Dorsolateral prefrontal cortex (tissue), 120 donors: ENCODE measurements at regions of chr11 and their contacts with region 1.

Region 1: GRCh38 chr11:85854557-85855340 is 434 bp upstream of the CCDC83 start:
- DNase-seq: peak; percentile 75 to 91 (median 80)
- H3K4me3 ChIP-seq: peak overlapping the region; percentile 37 to 91 (median 68)
- H3K27ac ChIP-seq: peak overlapping the region in 55 of 59 donors; percentile 40 to 97 (median 84)
- H3K27me3 ChIP-seq: no peaks in the 10 kb centered on the region
- CTCF ChIP-seq: peak; percentile 86 to 99 (median 94)

Region 2: GRCh38 chr11:85694386-85694980 is 160.3 kb before region 1 on chr11:
- intact Hi-C with region 1: loop called in 1 of 2 experiments (anchors 10 kb)
- DNase-seq: no peak
- H3K4me3 ChIP-seq: no peak overlapping the region
- H3K27ac ChIP-seq: peak overlapping the region in 2 of 59 donors; percentile 7 to 11
- H3K27me3 ChIP-seq: no peaks in the 10 kb centered on the region
- CTCF ChIP-seq: peak in 55 of 56 donors; percentile 56 to 90 (median 69)

Region 3: DNA sequence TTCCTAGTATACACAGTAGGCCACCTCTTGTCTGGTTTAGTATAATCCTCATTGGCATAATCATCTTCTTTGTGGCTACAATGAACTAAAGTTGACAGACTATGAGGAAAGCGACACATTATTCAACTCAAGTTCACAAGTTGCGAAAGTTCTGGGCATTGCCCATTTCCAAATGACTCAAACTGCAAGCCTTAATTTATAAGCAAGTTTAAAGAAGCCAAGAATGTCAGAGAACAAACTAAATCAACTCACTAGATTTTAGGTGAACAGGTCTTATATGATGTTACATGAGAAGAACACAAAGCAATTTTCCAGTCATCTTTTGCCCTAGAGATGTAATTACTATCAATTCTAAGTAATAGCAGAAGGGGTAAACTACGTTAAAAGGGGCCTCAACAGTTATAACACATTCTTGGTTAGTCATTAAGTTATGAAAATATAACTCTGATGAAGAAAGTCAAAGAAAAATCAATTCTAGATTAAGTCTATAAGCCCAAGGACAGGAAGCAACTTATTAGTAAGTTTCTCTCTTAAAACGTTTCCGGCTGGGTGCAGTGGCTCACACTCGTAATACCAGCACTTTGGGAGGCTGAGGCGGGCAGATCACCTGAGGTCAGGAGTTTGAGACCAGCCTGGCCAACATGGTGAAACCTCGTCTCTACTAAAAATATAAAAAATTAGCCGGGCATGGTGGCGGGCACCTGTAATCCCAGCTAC is 192.7 kb after region 1 on chr11:
- intact Hi-C with region 1: loop called (anchors 5 to 10 kb)
- DNase-seq: no peak
- H3K4me3 ChIP-seq: no peak overlapping the region
- H3K27ac ChIP-seq: peak overlapping the region in 31 of 59 donors; percentile 4 to 93 (median 30)
- H3K27me3 ChIP-seq: no peaks in the 10 kb centered on the region
- CTCF ChIP-seq: no peak

Region 4: GRCh38 chr11:86218125-86219084 is 363.7 kb after region 1 on chr11:
- intact Hi-C with region 1: loop called (anchors 2 to 5 kb)
- DNase-seq: peak; percentile 46 to 72 (median 60)
- H3K4me3 ChIP-seq: peak overlapping the region in 58 of 59 donors; percentile 2 to 64 (median 42)
- H3K27ac ChIP-seq: peak overlapping the region in 40 of 59 donors; percentile 5 to 80 (median 52)
- H3K27me3 ChIP-seq: no peaks in the 10 kb centered on the region
- CTCF ChIP-seq: peak; percentile 63 to 95 (median 89)

Region 5: DNA sequence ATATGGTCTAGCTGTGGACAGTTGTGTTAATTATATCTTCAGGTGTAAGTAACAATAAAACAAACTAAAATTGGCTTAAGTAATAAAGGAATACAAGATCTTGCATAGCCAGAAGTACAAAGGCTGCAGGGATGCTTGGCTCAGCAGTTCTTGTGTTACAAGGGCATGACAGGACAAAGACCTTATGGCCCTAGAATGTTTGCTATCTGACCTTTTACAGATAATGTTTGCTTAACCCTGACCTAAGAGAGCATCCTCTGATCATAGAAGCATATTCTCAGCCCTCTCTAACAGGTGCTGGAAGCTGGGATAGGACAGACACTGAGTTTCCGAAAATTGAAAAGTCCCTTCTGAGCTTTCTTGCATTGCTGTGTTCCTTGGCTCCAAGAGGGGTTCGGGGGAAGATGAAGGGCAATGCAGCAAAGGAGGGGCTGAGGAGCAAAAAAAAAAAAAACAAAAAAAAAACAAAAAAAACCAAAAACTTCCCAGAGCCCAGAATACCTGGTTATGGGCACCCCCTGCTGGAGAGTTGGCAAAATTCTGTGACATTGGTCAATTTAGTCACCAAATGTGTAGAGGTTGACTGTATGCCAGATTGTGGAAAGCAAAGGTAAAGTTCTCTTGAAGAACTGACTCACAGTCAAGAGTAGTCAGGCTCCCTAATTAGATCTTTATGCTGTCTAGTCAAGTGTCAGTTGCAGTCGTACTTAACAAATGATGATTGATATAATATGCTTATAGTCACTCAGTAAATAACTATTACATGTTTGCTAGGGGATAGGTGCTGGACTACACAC is 436.9 kb after region 1 on chr11:
- intact Hi-C with region 1: loop called (anchors 5 to 10 kb)
- DNase-seq: peak in 5 of 10 donors; percentile 35 to 58 (median 49)
- H3K4me3 ChIP-seq: no peak overlapping the region
- H3K27ac ChIP-seq: no peak overlapping the region
- H3K27me3 ChIP-seq: no peaks in the 10 kb centered on the region
- CTCF ChIP-seq: peak; percentile 51 to 81 (median 72)

Region 6: GRCh38 chr11:87545858-87546257 is 1691.1 kb after region 1 on chr11:
- intact Hi-C with region 1: no loop called
- DNase-seq: no peak
- H3K4me3 ChIP-seq: no peak overlapping the region
- H3K27ac ChIP-seq: no peak overlapping the region
- H3K27me3 ChIP-seq: no peaks in the 10 kb centered on the region
- CTCF ChIP-seq: no peak